HEK293 (cell line): ENCODE measurements at regions of chr6 and their contacts with region 1.

Region 1: GRCh38 chr6:42652024-42652746 is 70.2 kb downstream of the PRPH2 start:
- H3K4me3 ChIP-seq: no peak overlapping the region
- H3K27ac ChIP-seq: no peak overlapping the region
- H3K4me1 ChIP-seq: no peaks in the 10 kb centered on the region
- CTCF ChIP-seq: no peak

Region 2: DNA sequence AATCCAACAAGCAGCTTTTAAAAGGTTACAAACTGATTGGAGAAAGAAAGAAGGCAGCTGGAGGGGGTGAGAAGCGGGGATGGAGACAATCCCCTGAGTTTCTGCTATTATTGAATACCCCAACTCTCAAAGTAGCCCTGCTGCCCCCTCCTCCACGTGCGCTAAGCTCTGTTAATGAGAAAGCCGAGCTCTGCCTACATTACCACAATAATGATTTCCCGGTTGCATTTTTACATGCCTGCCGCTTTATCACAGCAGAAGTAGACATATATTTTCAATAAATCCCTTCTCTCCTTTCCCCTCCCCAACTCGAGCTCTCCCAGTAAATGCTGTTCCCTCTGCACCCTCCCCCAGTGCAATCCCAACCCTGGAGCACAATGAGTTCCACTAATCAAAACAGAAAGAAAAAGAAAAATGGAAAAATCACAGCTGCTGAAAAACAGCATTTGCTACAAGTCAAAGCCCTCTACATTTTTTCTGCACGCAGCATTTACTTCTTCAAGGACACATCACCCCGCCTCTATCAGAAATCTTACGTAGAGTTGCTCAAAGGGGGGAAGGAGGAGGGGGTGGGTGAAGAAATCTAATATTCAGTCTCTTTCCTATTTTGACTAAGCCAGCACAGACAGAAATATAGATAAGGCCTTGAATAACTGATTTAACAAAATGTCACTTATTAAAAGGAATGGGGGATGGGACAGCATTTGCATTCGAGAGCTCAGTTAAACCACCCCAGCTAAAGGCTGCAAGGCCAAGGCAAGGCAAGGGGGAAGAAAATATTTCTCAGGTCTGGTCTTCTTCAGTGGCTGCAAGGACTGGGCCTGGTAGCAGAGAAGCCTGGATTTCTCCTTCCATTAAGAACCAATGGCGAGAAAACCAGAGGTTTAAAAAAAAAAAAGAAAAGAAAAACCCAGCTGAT is 211.1 kb before region 1 on chr6:
- CTCF ChIA-PET with region 1: no interaction called
- POLR2A ChIA-PET with region 1: no interaction called
- H3K4me3 ChIP-seq: no peak overlapping the region
- H3K27ac ChIP-seq: no peak overlapping the region
- H3K4me1 ChIP-seq: peaks cover 12% of the 10 kb centered on the region; the same call in 1 of the 2 replicates
- CTCF ChIP-seq: no peak

Region 3: DNA sequence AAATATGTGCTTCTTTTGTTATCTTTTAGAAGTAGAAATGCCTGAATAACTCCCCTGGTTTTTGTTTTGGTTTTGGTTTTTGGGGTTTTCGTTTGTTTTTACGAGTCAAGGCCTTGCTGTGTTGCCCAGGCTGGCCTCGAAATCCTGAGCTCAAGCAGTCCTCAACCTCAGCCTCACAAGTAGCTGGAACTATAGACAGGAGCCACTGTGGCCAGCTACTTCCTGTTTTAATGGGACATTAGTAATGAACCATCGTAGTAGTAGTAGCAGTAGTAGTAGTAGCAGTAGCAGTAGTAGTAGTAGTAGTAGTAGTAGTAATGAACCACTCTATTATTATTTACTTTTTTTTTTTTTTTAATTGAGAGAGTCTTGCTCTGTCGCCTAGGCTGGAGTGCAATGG is 22.3 kb before region 1 on chr6:
- CTCF ChIA-PET with region 1: no interaction called
- POLR2A ChIA-PET with region 1: no interaction called
- H3K4me3 ChIP-seq: no peak overlapping the region
- H3K27ac ChIP-seq: no peak overlapping the region
- H3K4me1 ChIP-seq: no peaks in the 10 kb centered on the region
- CTCF ChIP-seq: no peak

Region 4: DNA sequence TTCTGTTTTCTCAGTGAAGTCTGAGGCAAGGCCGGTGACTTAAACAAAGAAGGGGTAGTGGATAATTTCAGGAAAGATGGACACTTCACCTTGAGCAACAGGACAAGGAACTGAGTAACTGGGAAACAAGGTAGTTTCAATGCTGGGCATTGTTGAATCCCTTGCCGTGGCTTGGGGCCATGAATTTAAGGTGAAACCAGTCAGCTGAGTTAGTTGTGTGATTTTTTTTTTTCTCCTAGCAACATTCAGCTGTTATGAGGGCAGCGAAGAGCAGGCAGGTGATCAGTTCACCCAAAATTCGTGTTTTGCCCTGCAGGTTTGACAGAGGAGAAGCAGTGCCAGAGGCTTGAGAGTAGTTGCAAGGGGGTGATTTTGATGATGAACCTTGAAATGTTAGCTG is 136.5 kb after region 1 on chr6:
- CTCF ChIA-PET with region 1: no interaction called
- POLR2A ChIA-PET with region 1: interaction called, 10 read pairs
- H3K4me3 ChIP-seq: no peak overlapping the region
- H3K27ac ChIP-seq: no peak overlapping the region
- H3K4me1 ChIP-seq: peaks cover 18% of the 10 kb centered on the region
- CTCF ChIP-seq: no peak